Testis (tissue), 5 donors: ENCODE measurements at regions of chr7 and their contacts with region 1.

Region 1: DNA sequence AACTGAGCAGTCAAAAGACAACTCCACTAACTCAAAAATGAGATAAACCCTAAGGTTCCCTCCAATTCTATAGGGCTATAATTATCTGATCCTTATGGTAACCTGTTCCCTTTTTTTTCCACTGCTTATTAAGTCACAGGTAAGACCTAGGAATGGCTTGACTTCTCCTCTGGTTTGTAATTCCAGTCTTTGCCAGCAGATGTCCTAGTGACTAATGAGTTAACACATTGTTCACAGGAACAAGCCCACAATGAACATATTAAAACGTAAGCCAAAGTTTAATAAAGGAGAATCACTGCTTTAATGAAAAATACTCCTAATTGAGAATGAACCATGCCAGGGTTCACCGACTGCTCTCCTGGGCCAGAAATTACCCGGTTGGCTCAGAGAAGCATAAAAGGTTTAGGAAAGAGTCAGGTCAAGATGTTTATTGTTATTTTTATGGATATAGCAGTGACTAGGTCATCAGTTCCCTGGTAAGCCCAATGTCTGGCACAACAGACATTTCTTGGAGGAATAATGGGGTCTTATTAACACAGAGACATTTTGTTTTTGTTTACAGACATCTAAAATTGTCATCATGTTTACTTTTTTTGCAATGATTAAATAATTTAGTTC is 120.1 kb downstream of the ELAPOR2 start:
- DNase-seq: peak; percentile 68
- H3K4me3 ChIP-seq: no peak overlapping the region
- H3K27ac ChIP-seq: no peak overlapping the region
- H3K4me1 ChIP-seq: no peaks in the 10 kb centered on the region
- H3K27me3 ChIP-seq: no peaks in the 10 kb centered on the region
- CTCF ChIP-seq: peak; percentile 46 to 67 (median 65)
- POLR2A ChIP-seq: no peak

Region 2: GRCh38 chr7:87231256-87231655 is 291.9 kb after region 1 on chr7:
- intact Hi-C with region 1: loop called (anchors 10 kb)
- DNase-seq: no peak
- H3K4me3 ChIP-seq: no peak overlapping the region
- H3K27ac ChIP-seq: no peak overlapping the region
- H3K4me1 ChIP-seq: no peaks in the 10 kb centered on the region
- H3K27me3 ChIP-seq: no peaks in the 10 kb centered on the region
- CTCF ChIP-seq: no peak
- POLR2A ChIP-seq: no peak

Region 3: GRCh38 chr7:87380905-87381304 is 441.6 kb after region 1 on chr7:
- intact Hi-C with region 1: no loop called
- DNase-seq: no peak
- H3K4me3 ChIP-seq: no peak overlapping the region
- H3K27ac ChIP-seq: no peak overlapping the region
- H3K4me1 ChIP-seq: no peaks in the 10 kb centered on the region
- H3K27me3 ChIP-seq: no peaks in the 10 kb centered on the region
- CTCF ChIP-seq: no peak
- POLR2A ChIP-seq: no peak